ENCODE measurements at regions of chr4 and their contacts with region 1.

Region 1: DNA sequence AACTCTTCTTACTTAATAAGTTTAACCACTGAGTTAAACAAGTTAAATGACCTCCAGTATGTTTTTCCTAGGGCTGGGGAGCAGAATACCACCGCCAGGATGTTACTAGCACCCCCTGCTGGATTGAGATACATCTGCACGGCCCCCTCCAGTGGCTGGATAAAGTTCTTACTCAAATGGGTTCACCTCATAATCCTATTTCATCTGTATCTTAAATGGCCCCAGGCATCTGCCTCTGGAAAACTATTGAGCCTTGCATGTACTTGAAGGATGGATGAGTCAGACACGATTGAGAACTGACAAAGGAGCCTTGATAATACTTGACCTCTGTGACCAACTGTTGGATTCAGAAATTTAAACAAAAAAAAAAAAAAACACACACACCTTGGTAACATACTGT is 61.5 kb upstream of the MMAA start:
- DNase-seq: peak; percentile 64
- H3K4me3 Mint-ChIP-seq: no peak overlapping the region
- H3K27ac Mint-ChIP-seq: no peak overlapping the region
- H3K4me1 Mint-ChIP-seq: no peaks in the 10 kb centered on the region
- H3K27me3 Mint-ChIP-seq: no peaks in the 10 kb centered on the region

Region 2: DNA sequence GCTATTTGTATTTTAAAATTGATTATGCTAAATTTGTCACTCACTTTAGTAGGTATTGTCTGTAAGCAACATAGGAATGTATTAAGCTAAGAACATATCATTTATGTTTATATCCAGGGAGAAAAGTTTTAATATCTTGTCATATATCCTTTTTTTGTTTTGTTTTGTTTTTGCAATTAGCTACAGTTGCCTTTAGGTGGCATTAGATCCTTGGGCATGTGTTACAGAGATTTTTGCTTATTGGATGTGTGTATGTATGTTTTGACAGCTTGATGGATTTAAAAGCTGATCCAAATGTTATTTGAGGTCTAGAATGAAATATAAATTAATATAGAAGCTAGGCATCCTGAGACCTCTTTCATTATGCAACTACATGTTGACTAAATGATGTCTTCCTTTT is 341.2 kb before region 1 on chr4:
- CTCF ChIA-PET with region 1: interaction called, 12 read pairs
- DNase-seq: no peak
- H3K4me3 Mint-ChIP-seq: no peak overlapping the region
- H3K27ac Mint-ChIP-seq: no peak overlapping the region
- H3K4me1 Mint-ChIP-seq: no peaks in the 10 kb centered on the region
- H3K27me3 Mint-ChIP-seq: peaks cover 1% of the 10 kb centered on the region

Region 3: DNA sequence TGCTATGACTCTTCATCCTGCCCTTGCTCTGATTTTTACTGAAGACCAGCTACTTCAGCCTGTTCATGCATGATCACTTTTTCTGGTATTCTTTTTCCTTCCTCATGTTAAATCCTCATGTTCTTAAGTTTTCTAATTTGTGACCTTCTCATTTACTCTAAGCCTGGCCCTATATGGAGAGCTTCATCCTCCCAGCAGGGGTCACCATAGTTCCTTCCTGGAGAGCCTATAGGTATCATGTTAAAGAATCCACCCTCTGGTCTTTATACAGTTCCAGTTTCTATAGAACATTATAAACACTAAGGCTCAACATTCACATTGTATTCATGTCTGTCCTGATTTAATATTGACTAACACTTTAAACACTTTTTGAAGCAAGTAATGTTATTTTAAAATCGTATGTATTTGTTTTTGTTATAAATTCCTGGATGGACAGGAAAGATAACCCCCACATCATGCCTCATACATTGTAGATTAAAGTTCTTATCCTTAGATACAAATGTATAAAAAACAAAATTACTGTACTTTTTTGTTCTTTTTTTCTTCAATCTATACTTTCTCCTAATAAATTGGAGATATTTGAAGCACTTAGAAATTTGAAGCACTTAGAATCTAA is 323.5 kb before region 1 on chr4:
- CTCF ChIA-PET with region 1: interaction called, 30 read pairs
- DNase-seq: peak; percentile 67
- H3K4me3 Mint-ChIP-seq: no peak overlapping the region
- H3K27ac Mint-ChIP-seq: no peak overlapping the region
- H3K4me1 Mint-ChIP-seq: no peaks in the 10 kb centered on the region
- H3K27me3 Mint-ChIP-seq: peaks cover 10% of the 10 kb centered on the region